Heart left ventricle (tissue), 16 donors: ENCODE measurements at regions of chr16 and their contacts with region 1.

Region 1: GRCh38 chr16:46673320-46674013 is 15.5 kb downstream of the VPS35 start:
- DNase-seq: peak in 3 of 5 donors; percentile 30 to 52 (median 42)
- ATAC-seq: peak; percentile 85 to 96 (median 93)
- H3K4me3 ChIP-seq: no peak overlapping the region
- H3K27ac ChIP-seq: no peak overlapping the region
- H3K4me1 ChIP-seq: no peaks in the 10 kb centered on the region
- H3K27me3 ChIP-seq: no peaks in the 10 kb centered on the region
- CTCF ChIP-seq: peak; percentile 83 to 94 (median 88)
- POLR2A ChIP-seq: no peak

Region 2: GRCh38 chr16:46801428-46802049 is 128.1 kb after region 1 on chr16:
- intact Hi-C with region 1: loop called in 8 of 10 experiments (anchors 2 to 5 kb)
- DNase-seq: no peak
- ATAC-seq: peak in 2 of 4 donors; percentile 55 to 56
- H3K4me3 ChIP-seq: no peak overlapping the region
- H3K27ac ChIP-seq: no peak overlapping the region
- H3K4me1 ChIP-seq: no peaks in the 10 kb centered on the region
- H3K27me3 ChIP-seq: no peaks in the 10 kb centered on the region
- CTCF ChIP-seq: peak; percentile 19 to 60 (median 50)
- POLR2A ChIP-seq: no peak

Region 3: DNA sequence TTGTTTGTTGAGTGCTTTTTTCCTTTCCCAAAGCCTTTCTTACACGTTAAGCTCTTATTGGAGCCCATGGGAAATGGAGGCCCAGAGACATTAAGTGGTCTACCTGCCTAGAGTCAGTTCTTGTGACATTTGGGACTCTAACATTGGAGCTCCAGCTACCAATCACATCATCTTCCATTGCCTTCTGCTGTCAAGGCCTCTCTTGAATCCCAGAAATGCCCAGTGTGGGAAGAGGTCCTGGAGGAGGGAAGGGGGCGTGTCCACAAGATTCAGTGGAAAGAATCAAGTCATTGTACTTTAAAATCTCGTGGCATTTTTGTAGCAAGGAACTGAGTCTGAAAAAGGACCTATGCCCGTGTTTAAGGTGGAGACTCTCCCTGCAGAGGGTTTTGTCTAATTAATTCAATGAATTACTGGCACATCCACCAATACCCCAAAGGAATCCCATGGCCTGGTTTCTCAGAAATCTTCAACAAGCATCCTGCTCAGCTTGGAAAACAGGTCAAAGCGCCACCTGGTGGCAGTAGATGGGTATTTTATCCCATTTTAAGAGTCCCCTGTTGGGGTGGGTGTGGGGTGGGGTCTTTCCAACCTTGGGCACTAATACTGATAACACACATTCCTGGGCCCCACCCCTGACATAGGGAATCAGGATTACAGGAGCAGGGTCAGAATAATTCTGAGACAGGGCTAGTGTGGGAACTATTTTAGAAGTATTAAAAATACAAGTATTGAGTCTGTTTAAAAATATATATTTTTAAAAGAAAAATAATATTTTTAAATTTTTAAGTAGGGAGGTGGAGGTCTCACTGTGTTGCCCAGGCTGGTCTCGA is 235.3 kb after region 1 on chr16:
- intact Hi-C with region 1: loop called in 9 of 10 experiments (anchors 5 to 10 kb)
- DNase-seq: peak in 2 of 5 donors; percentile 34 to 36
- ATAC-seq: peak in 2 of 4 donors; percentile 53 to 65
- H3K4me3 ChIP-seq: no peak overlapping the region
- H3K27ac ChIP-seq: no peak overlapping the region
- H3K4me1 ChIP-seq: peaks cover 0 to 8% (median 0%) of the 10 kb centered on the region in 12 donors
- H3K27me3 ChIP-seq: no peaks in the 10 kb centered on the region
- CTCF ChIP-seq: peak; percentile 65 to 81 (median 77)
- POLR2A ChIP-seq: no peak

Region 4: DNA sequence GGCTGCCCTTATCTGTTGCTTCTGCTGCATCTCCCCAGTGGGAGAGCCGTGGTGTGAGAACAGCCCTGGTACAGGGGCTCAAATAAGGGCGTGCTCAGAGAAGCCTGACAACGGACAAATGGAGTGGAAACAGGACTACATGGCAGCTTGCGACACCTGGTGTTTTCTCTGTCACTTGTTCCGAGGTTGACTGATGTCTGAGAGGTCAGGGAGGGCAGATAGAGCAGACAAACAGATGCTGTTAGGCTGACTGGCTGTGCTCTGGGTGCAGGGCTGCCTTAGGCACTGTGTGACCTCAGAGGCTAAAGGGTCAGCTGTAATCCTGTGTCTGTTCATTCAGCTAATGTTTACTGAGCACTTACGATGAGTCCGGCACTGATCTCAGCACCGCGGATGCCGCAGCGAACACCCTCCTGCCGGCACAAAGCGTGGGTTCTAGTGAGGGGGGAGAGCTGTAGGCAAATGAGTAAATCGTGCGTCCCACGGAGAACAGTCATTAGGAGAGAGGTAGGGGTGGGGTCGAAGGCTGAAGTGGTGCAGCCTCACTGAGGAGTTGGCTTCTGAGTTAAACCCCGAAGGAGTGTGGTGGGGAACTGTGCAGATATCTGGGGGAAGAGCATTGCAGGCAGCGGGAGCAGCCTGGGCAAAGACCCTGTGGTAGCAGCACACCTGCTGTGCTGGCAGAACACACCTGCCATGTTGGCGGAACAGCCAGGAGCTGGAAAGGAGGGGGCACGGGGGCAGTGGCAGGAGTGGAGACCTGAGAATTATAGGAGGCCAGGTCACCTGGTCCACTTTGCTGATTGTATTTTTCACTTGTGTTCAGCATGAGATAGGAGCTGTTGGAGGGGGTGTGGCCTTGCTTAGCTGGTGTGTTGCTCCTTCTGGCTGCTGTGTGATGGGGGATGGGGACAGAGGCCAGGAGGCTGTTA is 245.7 kb after region 1 on chr16:
- intact Hi-C with region 1: loop called in 1 of 10 experiments (anchors 10 kb)
- DNase-seq: no peak
- ATAC-seq: no peak
- H3K4me3 ChIP-seq: no peak overlapping the region
- H3K27ac ChIP-seq: no peak overlapping the region
- H3K4me1 ChIP-seq: peaks cover 0 to 1% (median 0%) of the 10 kb centered on the region in 12 donors
- H3K27me3 ChIP-seq: no peaks in the 10 kb centered on the region
- CTCF ChIP-seq: no peak
- POLR2A ChIP-seq: no peak

Region 5: GRCh38 chr16:46961373-46962353 is 288.2 kb after region 1 on chr16:
- intact Hi-C with region 1: loop called in 1 of 10 experiments (anchors 10 kb)
- DNase-seq: no peak
- ATAC-seq: peak in 3 of 4 donors; percentile 9 to 65 (median 39)
- H3K4me3 ChIP-seq: no peak overlapping the region
- H3K27ac ChIP-seq: peak overlapping the region in 1 of 12 donors; percentile 6
- H3K4me1 ChIP-seq: peaks cover 0 to 22% (median 11%) of the 10 kb centered on the region in 12 donors
- H3K27me3 ChIP-seq: no peaks in the 10 kb centered on the region
- CTCF ChIP-seq: no peak
- POLR2A ChIP-seq: no peak